ENCODE measurements at regions of chr3 and their contacts with region 1.

Region 1: DNA sequence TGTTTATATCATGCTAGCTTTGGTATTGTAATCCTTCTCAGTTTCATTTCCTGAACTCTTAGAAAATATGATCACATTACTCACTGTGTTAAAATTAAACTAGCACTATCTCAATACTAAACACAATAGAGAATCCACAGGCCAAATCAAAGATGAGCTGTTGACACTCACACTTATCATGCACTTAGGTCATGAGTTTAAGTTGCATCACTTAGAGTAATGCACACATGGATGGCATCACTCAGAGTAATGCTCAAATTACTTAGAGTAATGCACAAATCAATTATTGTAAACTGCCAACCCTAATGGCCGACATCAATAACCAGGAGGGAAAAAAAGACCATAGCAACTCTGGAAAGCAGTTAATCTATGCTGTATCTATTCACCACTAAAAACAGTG is 40.0 kb upstream of the MCF2L2 start:
- DNase-seq: no peak
- ATAC-seq: peak; percentile 77
- H3K4me3 Mint-ChIP-seq: no peak overlapping the region
- H3K27ac Mint-ChIP-seq: peak overlapping the region; percentile 84
- H3K4me1 Mint-ChIP-seq: peaks cover 26% of the 10 kb centered on the region
- H3K27me3 Mint-ChIP-seq: no peaks in the 10 kb centered on the region

Region 2: GRCh38 chr3:183317886-183318865 is 150.2 kb before region 1 on chr3:
- CTCF ChIA-PET with region 1: no interaction called
- POLR2A ChIA-PET with region 1: no interaction called
- intact Hi-C with region 1: no loop called
- DNase-seq: no peak
- ATAC-seq: no peak
- H3K4me3 Mint-ChIP-seq: no peak overlapping the region
- H3K27ac Mint-ChIP-seq: no peak overlapping the region
- H3K4me1 Mint-ChIP-seq: peaks cover 21% of the 10 kb centered on the region
- H3K27me3 Mint-ChIP-seq: no peaks in the 10 kb centered on the region

Region 3: DNA sequence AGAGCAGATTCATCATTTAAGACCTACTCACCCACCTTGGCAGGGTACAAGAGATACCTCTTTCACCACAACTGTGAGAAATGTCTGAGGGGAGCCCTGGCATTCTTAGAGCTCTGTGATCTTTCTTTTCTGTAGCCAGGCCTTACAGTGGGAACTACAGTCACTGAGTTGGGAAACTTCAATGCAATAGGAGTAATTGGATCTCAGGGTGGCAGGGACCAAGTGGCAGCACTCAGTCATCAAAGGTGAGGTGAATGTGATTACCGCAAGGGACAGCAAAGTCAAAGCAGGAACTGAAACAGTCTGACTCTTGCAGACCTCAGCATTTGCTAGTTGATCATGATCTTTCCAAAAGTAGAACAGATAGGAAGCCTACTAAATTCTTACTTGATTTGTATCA is 32.8 kb before region 1 on chr3:
- CTCF ChIA-PET with region 1: interaction called, 6 read pairs
- POLR2A ChIA-PET with region 1: interaction called, 4 read pairs
- intact Hi-C with region 1: loop called (anchors 1 to 2 kb)
- DNase-seq: peak; percentile 51
- ATAC-seq: peak; percentile 88
- H3K4me3 Mint-ChIP-seq: no peak overlapping the region
- H3K27ac Mint-ChIP-seq: no peak overlapping the region
- H3K4me1 Mint-ChIP-seq: peaks cover 40% of the 10 kb centered on the region
- H3K27me3 Mint-ChIP-seq: peaks cover 2% of the 10 kb centered on the region

Region 4: GRCh38 chr3:183515968-183516851 is 47.8 kb after region 1 on chr3:
- CTCF ChIA-PET with region 1: interaction called, 5 read pairs
- POLR2A ChIA-PET with region 1: no interaction called
- intact Hi-C with region 1: loop called in 1 of 2 experiments (anchors 1 kb)
- DNase-seq: peak; percentile 72
- ATAC-seq: peak; percentile 81
- H3K4me3 Mint-ChIP-seq: no peak overlapping the region
- H3K27ac Mint-ChIP-seq: peak overlapping the region; percentile 81
- H3K4me1 Mint-ChIP-seq: peaks cover 83% of the 10 kb centered on the region
- H3K27me3 Mint-ChIP-seq: no peaks in the 10 kb centered on the region

Region 5: GRCh38 chr3:183697610-183698317 is 229.3 kb after region 1 on chr3 and contains the start of gene YEATS2:
- CTCF ChIA-PET with region 1: interaction called, 3 read pairs
- POLR2A ChIA-PET with region 1: no interaction called
- intact Hi-C with region 1: loop called (anchors 1 to 5 kb)
- DNase-seq: peak; percentile 91
- ATAC-seq: peak; percentile 81
- H3K4me3 Mint-ChIP-seq: peak within 1 kb of the TSS; percentile 91
- H3K27ac Mint-ChIP-seq: peak within 1 kb of the TSS; percentile 89
- H3K4me1 Mint-ChIP-seq: peaks cover 31% of the 10 kb centered on the region
- H3K27me3 Mint-ChIP-seq: no peaks in the 10 kb centered on the region
- total RNA-seq, gene YEATS2: 59.4 to 73.9 TPM

Region 6: GRCh38 chr3:183825456-183826161 is 357.2 kb after region 1 on chr3 and contains the start of gene MAP6D1:
- CTCF ChIA-PET with region 1: interaction called, 3 read pairs
- POLR2A ChIA-PET with region 1: no interaction called
- intact Hi-C with region 1: loop called (anchors 2 to 5 kb)
- DNase-seq: peak; percentile 68
- ATAC-seq: peak; percentile 59
- H3K4me3 Mint-ChIP-seq: peak within 1 kb of the TSS; percentile 74
- H3K27ac Mint-ChIP-seq: peak within 1 kb of the TSS; percentile 55
- H3K4me1 Mint-ChIP-seq: peaks cover 11% of the 10 kb centered on the region
- H3K27me3 Mint-ChIP-seq: peaks cover 2% of the 10 kb centered on the region
- total RNA-seq, gene MAP6D1: 1.3 to 1.6 TPM

Region 7: DNA sequence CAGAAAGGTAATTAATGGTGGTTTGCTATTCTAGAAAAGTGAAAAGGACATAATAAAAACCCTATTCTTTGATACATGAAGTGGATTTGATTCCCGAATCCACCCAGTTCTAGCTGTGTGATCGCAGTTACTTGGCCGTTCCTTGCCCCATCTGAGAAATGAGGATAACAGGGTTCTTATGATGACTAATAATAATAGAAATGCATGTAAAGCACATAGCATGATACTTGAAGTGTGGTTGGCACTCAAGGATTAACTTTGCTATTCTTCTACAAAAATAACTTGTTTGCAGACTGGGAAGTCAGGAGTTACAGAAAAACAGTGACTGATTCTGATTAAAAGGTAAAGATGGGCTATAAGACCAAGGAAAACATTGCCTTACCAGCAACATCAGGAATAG is 389.4 kb after region 1 on chr3:
- CTCF ChIA-PET with region 1: no interaction called
- POLR2A ChIA-PET with region 1: no interaction called
- intact Hi-C with region 1: no loop called
- DNase-seq: no peak
- ATAC-seq: no peak
- H3K4me3 Mint-ChIP-seq: no peak overlapping the region
- H3K27ac Mint-ChIP-seq: no peak overlapping the region
- H3K4me1 Mint-ChIP-seq: peaks cover 2% of the 10 kb centered on the region
- H3K27me3 Mint-ChIP-seq: no peaks in the 10 kb centered on the region

Region 8: GRCh38 chr3:184663756-184664155 is 1195.3 kb after region 1 on chr3:
- CTCF ChIA-PET with region 1: no interaction called
- POLR2A ChIA-PET with region 1: no interaction called
- intact Hi-C with region 1: no loop called
- DNase-seq: no peak
- ATAC-seq: no peak
- H3K4me3 Mint-ChIP-seq: no peak overlapping the region
- H3K27ac Mint-ChIP-seq: no peak overlapping the region
- H3K4me1 Mint-ChIP-seq: no peaks in the 10 kb centered on the region
- H3K27me3 Mint-ChIP-seq: peaks cover 3% of the 10 kb centered on the region

Measured in activated CD4-positive, alpha-beta T cell treated with anti-CD3 and anti-CD28 coated beads for 36 hours (primary cell).